B cell (primary cell): ENCODE measurements at regions of chr17 and their contacts with region 1.

Region 1: GRCh38 chr17:56913864-56914640 is at the start of gene TRIM25:
- DNase-seq: peak; percentile 93
- ATAC-seq: peak; percentile 88
- H3K4me3 ChIP-seq: peak within 1 kb of the TSS; percentile 83 to 93 (median 86)
- H3K4me3 Mint-ChIP-seq: peak within 1 kb of the TSS; percentile 98
- H3K27ac ChIP-seq: peak within 1 kb of the TSS; percentile 71 to 84
- H3K27ac Mint-ChIP-seq: peak within 1 kb of the TSS; percentile 94
- H3K4me1 ChIP-seq: peaks cover 47 to 54% of the 10 kb centered on the region in 2 donors
- H3K4me1 Mint-ChIP-seq: peaks cover 59% of the 10 kb centered on the region
- H3K27me3 ChIP-seq: no peaks in the 10 kb centered on the region
- H3K27me3 Mint-ChIP-seq: no peaks in the 10 kb centered on the region
- CTCF ChIP-seq: no peak
- total RNA-seq, gene TRIM25: 87.4 and 92.4 TPM in 2 replicates

Region 2: DNA sequence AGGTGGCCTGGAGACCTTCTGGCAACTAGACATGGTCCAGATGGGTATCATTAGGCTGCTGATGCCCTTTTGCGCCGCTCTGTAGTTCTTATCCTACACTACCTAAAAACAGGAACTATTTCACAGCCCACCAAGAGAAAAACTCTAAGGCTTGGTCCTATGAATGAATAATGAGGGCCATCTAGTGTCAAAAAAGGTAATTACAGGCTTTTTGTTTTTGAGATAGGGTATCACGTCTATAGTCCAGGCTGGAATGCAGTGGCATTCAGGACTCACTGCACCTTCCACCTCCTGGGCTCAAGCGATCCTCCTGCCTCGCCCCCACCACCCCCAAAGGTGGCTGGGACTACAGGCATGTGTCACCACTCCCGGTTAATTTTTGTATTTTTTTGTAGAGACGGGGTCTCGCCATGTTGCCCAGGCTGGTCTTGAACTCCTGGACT is 25.9 kb after region 1 on chr17:
- CTCF ChIA-PET with region 1: interaction called, 4 read pairs
- POLR2A ChIA-PET with region 1: no interaction called
- intact Hi-C with region 1: loop called (anchors 1 kb)
- DNase-seq: peak; percentile 83
- ATAC-seq: peak; percentile 91
- H3K4me3 ChIP-seq: no peak overlapping the region
- H3K4me3 Mint-ChIP-seq: no peak overlapping the region
- H3K27ac ChIP-seq: no peak overlapping the region
- H3K27ac Mint-ChIP-seq: no peak overlapping the region
- H3K4me1 ChIP-seq: peaks cover 0 to 3% of the 10 kb centered on the region in 2 donors
- H3K4me1 Mint-ChIP-seq: peaks cover 4% of the 10 kb centered on the region
- H3K27me3 ChIP-seq: no peaks in the 10 kb centered on the region
- H3K27me3 Mint-ChIP-seq: no peaks in the 10 kb centered on the region
- CTCF ChIP-seq: peak; percentile 84

Region 3: DNA sequence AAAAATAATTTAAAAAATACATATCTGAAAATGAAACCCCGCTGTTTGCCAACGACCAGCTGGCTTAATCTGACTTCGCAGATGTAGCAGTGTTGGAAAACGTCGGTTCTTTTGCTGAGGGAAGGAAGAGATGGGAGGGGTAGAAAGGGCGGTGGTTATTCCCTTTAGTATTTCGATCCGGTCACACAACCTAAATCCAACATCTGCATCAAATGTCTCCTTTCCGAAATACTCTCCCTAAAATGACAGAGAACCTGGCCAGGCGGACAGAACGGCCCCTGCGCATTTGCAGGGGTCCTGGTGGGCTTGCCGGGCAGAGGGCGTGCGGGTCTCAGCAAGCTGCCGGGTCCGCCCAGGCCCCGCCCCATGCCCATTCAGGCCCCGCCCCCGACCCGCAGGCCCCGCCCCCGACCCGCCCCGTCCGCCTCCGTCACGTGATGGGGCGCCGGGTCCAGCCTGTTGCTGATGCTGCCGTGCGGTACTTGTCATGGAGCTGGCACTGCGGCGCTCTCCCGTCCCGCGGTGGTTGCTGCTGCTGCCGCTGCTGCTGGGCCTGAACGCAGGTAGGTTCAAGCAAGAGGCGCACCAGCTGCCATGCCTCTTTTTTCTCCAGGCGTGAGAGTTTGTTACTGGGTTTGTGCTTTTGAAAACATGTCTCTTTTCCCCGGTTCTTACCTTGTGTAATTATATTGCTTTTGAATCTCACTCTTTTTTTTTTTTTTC is 63.8 kb after region 1 on chr17 and contains the start of gene SCPEP1:
- CTCF ChIA-PET with region 1: no interaction called
- POLR2A ChIA-PET with region 1: no interaction called
- intact Hi-C with region 1: loop called (anchors 1 kb)
- DNase-seq: peak; percentile 83
- ATAC-seq: peak; percentile 98
- H3K4me3 ChIP-seq: peak within 1 kb of the TSS; percentile 65 to 87 (median 74)
- H3K4me3 Mint-ChIP-seq: peak within 1 kb of the TSS; percentile 96
- H3K27ac ChIP-seq: peak within 1 kb of the TSS; percentile 44 to 76
- H3K27ac Mint-ChIP-seq: peak within 1 kb of the TSS; percentile 95
- H3K4me1 ChIP-seq: peaks cover 13 to 24% of the 10 kb centered on the region in 2 donors
- H3K4me1 Mint-ChIP-seq: peaks cover 34% of the 10 kb centered on the region
- H3K27me3 ChIP-seq: no peaks in the 10 kb centered on the region
- H3K27me3 Mint-ChIP-seq: no peaks in the 10 kb centered on the region
- CTCF ChIP-seq: no peak
- total RNA-seq, gene SCPEP1: 66.6 and 66.9 TPM in 2 replicates

Region 4: DNA sequence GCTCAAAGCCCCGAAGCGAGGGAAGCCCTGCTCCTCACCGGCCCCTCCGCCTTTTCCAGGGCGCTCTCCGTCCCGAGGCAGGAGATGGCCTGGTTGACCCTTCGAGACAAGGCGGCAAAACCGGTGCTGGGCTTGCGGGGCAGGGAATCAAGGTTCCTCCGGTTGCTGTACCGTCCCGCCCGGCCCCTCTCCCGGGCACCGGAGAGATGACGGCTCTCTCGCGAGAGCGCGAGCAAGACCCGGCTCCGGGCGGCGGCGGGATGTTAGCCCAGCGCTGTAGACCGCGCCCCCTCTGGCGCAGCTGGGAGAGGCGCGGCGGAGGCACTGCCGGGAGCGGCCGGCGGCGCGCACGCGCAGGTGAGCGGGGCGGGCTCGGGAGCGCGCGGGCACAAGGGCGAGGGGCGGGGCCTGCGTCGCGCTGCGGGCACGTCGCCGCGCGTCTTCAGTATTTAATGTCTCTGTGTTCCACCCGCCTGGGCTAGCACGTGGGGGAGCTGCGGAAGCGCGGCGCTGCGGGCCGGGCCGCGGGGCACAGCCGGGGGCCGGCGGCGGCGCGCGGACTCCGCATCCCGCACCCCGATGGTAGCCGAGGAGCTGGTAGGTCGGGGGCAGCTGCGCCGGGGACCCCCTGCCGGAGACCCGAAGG is 170.9 kb after region 1 on chr17 and contains the start of gene AKAP1:
- CTCF ChIA-PET with region 1: no interaction called
- POLR2A ChIA-PET with region 1: no interaction called
- intact Hi-C with region 1: loop called (anchors 2 kb)
- DNase-seq: peak; percentile 97
- ATAC-seq: peak; percentile 85
- H3K4me3 ChIP-seq: peak within 1 kb of the TSS; percentile 71 to 95 (median 85)
- H3K4me3 Mint-ChIP-seq: peak within 1 kb of the TSS; percentile 95
- H3K27ac ChIP-seq: peak within 1 kb of the TSS; percentile 77 to 86
- H3K27ac Mint-ChIP-seq: peak within 1 kb of the TSS; percentile 91
- H3K4me1 ChIP-seq: peaks cover 14 to 16% of the 10 kb centered on the region in 2 donors
- H3K4me1 Mint-ChIP-seq: peaks cover 20% of the 10 kb centered on the region
- H3K27me3 ChIP-seq: peaks cover 0 to 3% (median 0%) of the 10 kb centered on the region in 4 experiments
- H3K27me3 Mint-ChIP-seq: no peaks in the 10 kb centered on the region
- CTCF ChIP-seq: no peak
- total RNA-seq, gene AKAP1: 20.1 and 27.1 TPM in 2 replicates